ENCODE measurements at regions of chr5 and their contacts with region 1.

Region 1: DNA sequence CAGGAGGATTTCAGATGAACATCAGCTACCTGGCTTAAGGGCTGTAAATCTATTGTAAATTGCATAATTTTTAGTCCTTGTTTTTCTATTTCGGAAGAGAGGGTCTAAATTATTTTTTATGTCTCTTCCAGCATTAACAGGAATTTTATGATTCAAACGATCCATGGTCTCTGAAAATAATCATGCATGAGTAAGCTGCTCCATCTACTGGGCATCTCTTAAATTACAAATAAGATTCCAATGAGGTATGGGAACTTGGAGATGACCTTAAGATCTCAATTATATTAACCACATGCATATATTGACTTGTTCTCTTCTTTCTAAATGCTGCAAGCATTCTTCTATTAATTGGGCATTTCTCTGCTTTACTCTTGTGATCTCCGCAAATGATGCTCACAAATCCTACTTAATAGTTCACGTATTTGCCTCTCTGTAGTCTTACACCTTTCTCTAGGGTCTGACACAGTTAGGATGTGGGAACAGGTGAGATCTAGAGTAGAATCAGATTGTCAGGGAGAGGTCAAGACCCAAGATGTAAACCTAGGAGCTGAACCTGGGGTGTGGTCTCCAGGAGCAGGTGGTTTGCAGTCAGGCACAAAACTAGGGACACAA is 86.9 kb downstream of the NUDT12 start:
- DNase-seq: no peak
- ATAC-seq: peak; percentile 68 to 92 (median 88)
- H3K4me3 ChIP-seq: no peak overlapping the region
- H3K27ac ChIP-seq: no peak overlapping the region
- H3K4me1 ChIP-seq: no peaks in the 10 kb centered on the region
- H3K27me3 ChIP-seq: no peaks in the 10 kb centered on the region
- CTCF ChIP-seq: peak; percentile 14 to 65 (median 48)

Region 2: GRCh38 chr5:103021314-103021713 is 454.4 kb before region 1 on chr5:
- intact Hi-C with region 1: no loop called
- DNase-seq: no peak
- ATAC-seq: no peak
- H3K4me3 ChIP-seq: no peak overlapping the region
- H3K27ac ChIP-seq: no peak overlapping the region
- H3K4me1 ChIP-seq: no peaks in the 10 kb centered on the region
- H3K27me3 ChIP-seq: no peaks in the 10 kb centered on the region
- CTCF ChIP-seq: no peak

Region 3: DNA sequence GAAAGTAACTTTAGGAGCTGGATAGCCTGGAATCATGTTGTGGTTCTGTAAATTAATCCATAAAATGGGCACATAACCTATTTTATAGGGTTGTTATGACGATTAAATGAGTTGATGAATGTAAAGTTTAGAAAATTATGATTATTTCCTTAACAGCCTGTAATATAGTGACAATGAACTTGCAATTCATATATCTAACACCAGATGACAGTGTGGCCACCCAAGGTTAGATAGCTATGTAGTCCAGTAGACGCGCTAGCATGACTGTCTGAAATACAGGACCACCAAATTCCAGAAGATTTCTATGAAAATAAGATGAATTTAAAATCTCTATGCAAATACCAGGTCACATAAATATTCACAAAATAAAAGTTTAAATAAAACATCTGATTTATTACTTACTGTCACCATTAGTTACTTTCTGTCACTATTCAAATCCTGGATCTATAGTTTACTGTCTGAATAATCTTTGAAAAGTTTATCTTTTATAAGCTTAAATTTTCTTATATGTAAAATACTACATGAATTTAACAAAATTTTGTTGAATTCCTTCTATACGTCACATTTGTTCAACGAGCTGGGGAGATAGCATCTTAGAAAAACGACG is 243.2 kb before region 1 on chr5:
- intact Hi-C with region 1: loop called (anchors 5 kb)
- DNase-seq: peak in 1 of 6 donors; percentile 27
- ATAC-seq: peak; percentile 79 to 96 (median 91)
- H3K4me3 ChIP-seq: no peak overlapping the region
- H3K27ac ChIP-seq: no peak overlapping the region
- H3K4me1 ChIP-seq: no peaks in the 10 kb centered on the region
- H3K27me3 ChIP-seq: no peaks in the 10 kb centered on the region
- CTCF ChIP-seq: peak in 3 of 4 donors; percentile 68 to 74 (median 71)

Measured in pancreas (tissue), 10 donors.